ENCODE measurements at regions of chr16 and their contacts with region 1.

Region 1: GRCh38 chr16:47258874-47259461 is 115.2 kb upstream of the NETO2 start:
- DNase-seq: peak; percentile 46
- ATAC-seq: no peak; the same call in 1 of the 2 replicates
- H3K4me3 ChIP-seq: no peak overlapping the region
- H3K27ac ChIP-seq: no peak overlapping the region
- H3K4me1 ChIP-seq: no peaks in the 10 kb centered on the region
- H3K27me3 ChIP-seq: no peaks in the 10 kb centered on the region
- CTCF ChIP-seq: peak; percentile 65

Region 2: GRCh38 chr16:47141773-47142485 is 117.0 kb before region 1 on chr16:
- CTCF ChIA-PET with region 1: no interaction called
- POLR2A ChIA-PET with region 1: no interaction called
- intact Hi-C with region 1: no loop called
- DNase-seq: peak; percentile 87
- ATAC-seq: peak; percentile 62
- H3K4me3 ChIP-seq: peak overlapping the region; percentile 69
- H3K27ac ChIP-seq: no peak overlapping the region
- H3K4me1 ChIP-seq: peaks cover 5% of the 10 kb centered on the region
- H3K27me3 ChIP-seq: no peaks in the 10 kb centered on the region
- CTCF ChIP-seq: peak; percentile 93

Region 3: GRCh38 chr16:47284999-47285398 is 26.0 kb after region 1 on chr16:
- CTCF ChIA-PET with region 1: no interaction called
- POLR2A ChIA-PET with region 1: no interaction called
- intact Hi-C with region 1: no loop called
- DNase-seq: no peak
- ATAC-seq: no peak
- H3K4me3 ChIP-seq: no peak overlapping the region
- H3K27ac ChIP-seq: no peak overlapping the region
- H3K4me1 ChIP-seq: no peaks in the 10 kb centered on the region
- H3K27me3 ChIP-seq: no peaks in the 10 kb centered on the region
- CTCF ChIP-seq: no peak

Region 4: DNA sequence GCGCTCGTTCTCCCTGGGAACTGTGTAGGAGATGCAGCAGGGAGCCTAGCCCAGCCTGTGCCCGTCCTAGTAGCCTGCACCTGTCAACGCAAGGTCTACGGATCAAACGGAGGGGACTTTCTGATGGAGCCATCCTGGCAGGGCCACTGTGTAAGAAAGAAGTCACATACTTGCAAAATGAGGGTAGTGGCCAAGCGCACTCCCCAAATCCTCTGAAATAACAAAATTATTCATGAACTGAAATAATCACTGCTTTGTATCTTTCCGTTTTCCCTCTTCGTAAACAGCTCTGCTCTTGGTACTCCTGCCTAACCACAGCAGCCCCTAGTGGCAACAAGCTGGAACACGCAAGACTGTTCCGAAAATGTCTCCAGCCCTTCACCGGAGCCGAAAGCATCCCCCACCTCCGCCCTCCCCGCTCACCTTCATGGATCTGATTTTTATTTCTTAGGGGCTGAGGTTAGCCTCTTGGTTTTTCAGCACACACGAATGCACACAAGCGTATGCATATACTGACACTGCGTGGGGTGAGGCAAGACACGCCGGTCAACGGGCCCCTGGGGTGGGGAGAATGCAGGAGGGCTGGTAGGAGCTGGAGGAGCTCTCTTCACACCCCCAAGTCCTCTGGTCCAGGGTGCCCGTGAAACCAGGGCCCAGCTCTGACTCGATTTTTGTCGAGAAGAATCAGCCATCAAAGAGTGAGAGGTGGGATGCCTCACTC is 796.1 kb after region 1 on chr16:
- CTCF ChIA-PET with region 1: no interaction called
- POLR2A ChIA-PET with region 1: no interaction called
- intact Hi-C with region 1: loop called (anchors 5 kb)
- DNase-seq: peak; percentile 67
- ATAC-seq: peak; percentile 96
- H3K4me3 ChIP-seq: peak overlapping the region; percentile 64
- H3K27ac ChIP-seq: no peak overlapping the region
- H3K4me1 ChIP-seq: peaks cover 11% of the 10 kb centered on the region
- H3K27me3 ChIP-seq: no peaks in the 10 kb centered on the region
- CTCF ChIP-seq: peak; percentile 84

Measured in PC-3 (cell line).